ENCODE measurements at regions of chr5 and their contacts with region 1.

Region 1: GRCh38 chr5:115069087-115069968 is 100.4 kb downstream of the TRIM36 start:
- DNase-seq: peak; percentile 56
- ATAC-seq: peak; percentile 81
- H3K4me3 ChIP-seq: no peak overlapping the region
- H3K27ac ChIP-seq: no peak overlapping the region
- H3K4me1 ChIP-seq: no peaks in the 10 kb centered on the region
- H3K27me3 ChIP-seq: peaks cover 9% of the 10 kb centered on the region
- CTCF ChIP-seq: peak; percentile 83

Region 2: GRCh38 chr5:113612060-113612496 is 1457.2 kb before region 1 on chr5:
- CTCF ChIA-PET with region 1: interaction called, 11 read pairs
- POLR2A ChIA-PET with region 1: no interaction called
- intact Hi-C with region 1: loop called (anchors 5 kb)
- DNase-seq: peak; percentile 46
- ATAC-seq: peak; percentile 69
- H3K4me3 ChIP-seq: no peak overlapping the region
- H3K27ac ChIP-seq: no peak overlapping the region
- H3K4me1 ChIP-seq: peaks cover 6% of the 10 kb centered on the region
- H3K27me3 ChIP-seq: no peaks in the 10 kb centered on the region; the same call in 1 of the 2 replicates
- CTCF ChIP-seq: peak; percentile 79

Region 3: GRCh38 chr5:114803353-114803752 is 266.0 kb before region 1 on chr5:
- CTCF ChIA-PET with region 1: no interaction called
- POLR2A ChIA-PET with region 1: no interaction called
- intact Hi-C with region 1: loop called (anchors 1 kb)
- DNase-seq: peak; percentile 25
- ATAC-seq: peak; percentile 69
- H3K4me3 ChIP-seq: no peak overlapping the region
- H3K27ac ChIP-seq: no peak overlapping the region
- H3K4me1 ChIP-seq: no peaks in the 10 kb centered on the region
- H3K27me3 ChIP-seq: no peaks in the 10 kb centered on the region
- CTCF ChIP-seq: peak; percentile 38

Region 4: GRCh38 chr5:114924769-114925168 is 144.6 kb before region 1 on chr5:
- CTCF ChIA-PET with region 1: no interaction called
- POLR2A ChIA-PET with region 1: no interaction called
- intact Hi-C with region 1: no loop called
- DNase-seq: no peak
- ATAC-seq: no peak
- H3K4me3 ChIP-seq: no peak overlapping the region
- H3K27ac ChIP-seq: no peak overlapping the region
- H3K4me1 ChIP-seq: no peaks in the 10 kb centered on the region
- H3K27me3 ChIP-seq: no peaks in the 10 kb centered on the region
- CTCF ChIP-seq: no peak

Region 5: DNA sequence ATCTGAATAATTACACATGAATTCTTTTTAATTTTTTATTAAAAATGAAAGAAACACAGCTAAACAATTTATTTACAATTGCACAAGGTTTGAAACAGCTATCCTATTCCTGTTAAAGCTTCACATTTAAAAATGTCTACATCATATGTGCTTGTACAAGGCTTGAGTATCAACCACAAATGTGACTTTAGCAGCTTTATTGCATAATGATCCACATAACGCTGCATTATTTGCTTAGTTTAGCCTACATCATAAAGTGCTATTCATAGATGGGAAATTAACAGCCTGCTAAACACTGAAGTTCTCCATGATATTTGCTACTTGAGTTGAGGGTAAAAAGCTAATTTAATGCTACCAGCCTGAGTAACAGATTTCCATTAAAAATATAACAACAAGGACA is 55.4 kb after region 1 on chr5:
- CTCF ChIA-PET with region 1: no interaction called
- POLR2A ChIA-PET with region 1: no interaction called
- intact Hi-C with region 1: no loop called
- DNase-seq: no peak
- ATAC-seq: no peak
- H3K4me3 ChIP-seq: no peak overlapping the region
- H3K27ac ChIP-seq: no peak overlapping the region
- H3K4me1 ChIP-seq: no peaks in the 10 kb centered on the region
- H3K27me3 ChIP-seq: no peaks in the 10 kb centered on the region
- CTCF ChIP-seq: no peak

Region 6: DNA sequence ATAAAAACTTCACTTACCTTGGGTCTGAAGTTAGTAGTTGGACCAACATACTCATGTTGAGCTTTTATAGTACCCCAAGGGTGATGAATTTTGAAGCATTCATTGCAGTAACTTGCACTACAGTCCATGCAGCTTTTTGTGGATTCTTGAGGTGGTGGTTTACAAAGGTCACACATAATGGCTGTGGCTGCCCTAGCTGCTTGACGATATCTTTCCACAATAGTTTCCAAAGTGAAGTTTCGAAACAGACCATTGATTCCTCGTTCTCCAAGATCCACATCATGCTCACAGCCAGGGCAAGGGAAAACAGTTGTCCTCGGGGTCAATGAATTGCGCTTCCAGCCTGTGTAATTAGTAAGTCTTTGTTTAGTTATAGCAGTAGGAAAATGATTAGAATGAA is 77.7 kb after region 1 on chr5:
- CTCF ChIA-PET with region 1: no interaction called
- POLR2A ChIA-PET with region 1: no interaction called
- intact Hi-C with region 1: no loop called
- DNase-seq: no peak
- ATAC-seq: no peak
- H3K4me3 ChIP-seq: no peak overlapping the region
- H3K27ac ChIP-seq: no peak overlapping the region
- H3K4me1 ChIP-seq: no peaks in the 10 kb centered on the region
- H3K27me3 ChIP-seq: 0 out of 2 replicates have a peak, but pooled peaks cover 3% of the 10 kb centered on the region
- CTCF ChIP-seq: no peak

Region 7: GRCh38 chr5:115231598-115231997 is 162.3 kb after region 1 on chr5:
- CTCF ChIA-PET with region 1: no interaction called
- POLR2A ChIA-PET with region 1: no interaction called
- intact Hi-C with region 1: no loop called
- DNase-seq: no peak
- ATAC-seq: no peak
- H3K4me3 ChIP-seq: no peak overlapping the region
- H3K27ac ChIP-seq: no peak overlapping the region
- H3K4me1 ChIP-seq: no peaks in the 10 kb centered on the region
- H3K27me3 ChIP-seq: no peaks in the 10 kb centered on the region
- CTCF ChIP-seq: no peak